K562 (cell line): ENCODE measurements at regions of chr2 and their contacts with region 1.

Region 1: DNA sequence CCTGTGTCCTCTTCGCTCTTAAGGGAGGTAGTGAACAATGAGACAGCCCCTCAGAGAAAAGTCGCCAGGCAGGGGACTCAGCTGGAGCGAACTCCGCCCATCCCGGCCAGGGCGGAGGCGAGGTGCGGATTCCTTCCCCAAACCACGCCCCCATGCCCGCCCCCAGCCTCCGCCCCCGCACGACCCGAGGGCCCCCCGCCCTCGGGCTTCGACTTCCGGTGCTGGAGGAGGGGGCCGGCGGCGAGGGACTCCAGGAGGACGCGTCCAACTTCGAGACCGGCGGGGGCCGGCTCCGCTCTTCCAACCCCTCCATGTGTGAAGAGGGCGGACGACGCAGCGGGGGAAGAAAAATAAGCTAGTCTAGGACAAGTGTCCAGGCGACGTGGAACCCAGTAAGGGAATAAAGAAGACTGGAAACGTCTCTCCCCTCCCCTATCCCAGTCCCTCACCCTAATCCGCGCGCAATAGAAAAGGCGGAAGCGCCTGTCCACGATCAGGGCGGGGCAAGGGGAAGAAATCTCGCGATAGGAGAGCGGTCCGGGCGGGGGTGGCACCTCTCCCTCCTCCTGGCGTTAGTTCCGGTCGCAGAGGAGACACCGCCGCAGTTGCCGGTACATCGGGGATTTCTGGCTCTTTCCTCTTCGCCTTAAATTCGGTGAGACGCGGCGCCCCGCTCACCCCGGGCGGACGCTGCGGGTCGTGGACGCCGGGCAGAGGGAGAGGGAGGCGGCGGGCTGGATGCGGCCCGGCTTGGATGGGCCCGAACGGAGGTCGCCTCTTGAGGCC is at the start of gene BZW1:
- DNase-seq: peak; percentile 94 to 96 (median 94)
- ATAC-seq: peak; percentile 88
- H3K4me3 ChIP-seq: peak within 1 kb of the TSS; percentile 96
- H3K27ac ChIP-seq: peak within 1 kb of the TSS; percentile 100
- H3K4me1 ChIP-seq: peaks cover 0 to 7% of the 10 kb centered on the region in 2 experiments; a peak in 3 of 5 replicates
- H3K27me3 ChIP-seq: no peaks in the 10 kb centered on the region
- CTCF ChIP-seq: no peak; a peak in 1 of 6 replicates
- EP300 ChIP-seq: no peak
- POLR2A ChIP-seq: peak; percentile 91
- RAD21 ChIP-seq: no peak
- polyA plus RNA-seq, gene BZW1: 235 to 244 TPM

Region 2: GRCh38 chr2:200578778-200579177 is 232.8 kb before region 1 on chr2:
- CTCF ChIA-PET with region 1: no interaction called
- POLR2A ChIA-PET with region 1: no interaction called
- in situ Hi-C with region 1: no loop called
- intact Hi-C with region 1: no loop called
- DNase-seq: peak in 1 of 4 experiments; percentile 4
- ATAC-seq: 0 out of 3 replicates have a peak, but pooled peaks have one; percentile 49
- H3K4me3 ChIP-seq: no peak overlapping the region
- H3K27ac ChIP-seq: no peak overlapping the region
- H3K4me1 ChIP-seq: no peaks in the 10 kb centered on the region
- H3K27me3 ChIP-seq: no peaks in the 10 kb centered on the region
- CTCF ChIP-seq: peak in 2 of 3 experiments; percentile 4 to 34; a peak in 1 of 6 replicates
- EP300 ChIP-seq: no peak
- POLR2A ChIP-seq: no peak
- RAD21 ChIP-seq: peak; percentile 9 to 36; a peak in 2 of 4 replicates

Region 3: DNA sequence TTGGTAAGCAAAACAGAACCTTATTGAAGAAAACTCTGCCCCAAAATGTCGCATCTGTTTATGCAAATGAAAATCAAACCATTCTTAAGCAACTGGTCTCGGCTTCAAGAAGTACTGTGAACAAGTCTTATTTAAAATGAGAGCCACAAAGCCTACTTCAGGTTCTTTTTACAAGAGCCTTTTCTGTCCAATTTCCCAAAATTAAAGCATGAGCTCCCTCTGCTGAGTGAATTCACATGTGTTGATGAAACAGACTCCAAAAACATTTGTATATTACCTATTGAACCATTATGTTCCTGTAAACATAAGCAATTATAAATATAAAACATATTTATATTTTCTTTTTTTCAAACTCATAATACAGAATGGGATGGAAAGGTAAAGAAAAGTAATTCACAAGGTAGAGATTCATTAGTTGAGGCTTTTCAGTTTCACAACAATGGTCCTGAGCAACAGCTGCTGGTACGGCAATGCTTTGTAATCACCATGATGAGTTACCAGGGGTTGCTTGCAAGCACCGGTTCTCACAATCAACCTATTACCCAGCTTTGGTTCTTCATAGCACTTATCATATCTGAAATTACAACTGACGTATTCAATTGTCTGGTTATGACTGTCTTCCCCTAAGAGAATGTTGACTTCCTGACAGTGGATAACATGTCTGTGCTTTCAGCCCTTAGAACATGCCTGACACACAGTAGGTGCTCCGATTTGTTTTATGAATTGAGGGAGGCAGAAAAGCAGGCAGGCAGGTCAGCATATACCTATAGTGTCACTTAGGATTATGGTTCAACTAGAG is 108.2 kb before region 1 on chr2:
- CTCF ChIA-PET with region 1: no interaction called
- POLR2A ChIA-PET with region 1: no interaction called
- in situ Hi-C with region 1: no loop called
- intact Hi-C with region 1: no loop called
- DNase-seq: peak in 1 of 4 experiments; percentile 48
- ATAC-seq: peak; percentile 63; the same call in 2 of the 3 replicates
- H3K4me3 ChIP-seq: no peak overlapping the region
- H3K27ac ChIP-seq: no peak overlapping the region
- H3K4me1 ChIP-seq: no peaks in the 10 kb centered on the region
- H3K27me3 ChIP-seq: peaks cover 3 to 4% of the 10 kb centered on the region in 2 experiments; a peak in 3 of 5 replicates
- CTCF ChIP-seq: peak; percentile 32 to 68 (median 42); a peak in 4 of 6 replicates
- EP300 ChIP-seq: no peak
- POLR2A ChIP-seq: no peak
- RAD21 ChIP-seq: peak; percentile 85 to 93

Region 4: GRCh38 chr2:200749631-200750322 is 61.8 kb before region 1 on chr2:
- CTCF ChIA-PET with region 1: no interaction called
- POLR2A ChIA-PET with region 1: no interaction called
- in situ Hi-C with region 1: no loop called
- intact Hi-C with region 1: loop called (anchors 5 kb)
- DNase-seq: no peak
- ATAC-seq: no peak; the same call in 2 of the 3 replicates
- H3K4me3 ChIP-seq: no peak overlapping the region
- H3K27ac ChIP-seq: no peak overlapping the region
- H3K4me1 ChIP-seq: peaks cover 0 to 5% of the 10 kb centered on the region in 2 experiments; a peak in 2 of 5 replicates
- H3K27me3 ChIP-seq: peaks cover 4 to 24% of the 10 kb centered on the region in 2 experiments; a peak in 3 of 5 replicates
- CTCF ChIP-seq: no peak
- EP300 ChIP-seq: no peak
- POLR2A ChIP-seq: no peak
- RAD21 ChIP-seq: no peak

Region 5: DNA sequence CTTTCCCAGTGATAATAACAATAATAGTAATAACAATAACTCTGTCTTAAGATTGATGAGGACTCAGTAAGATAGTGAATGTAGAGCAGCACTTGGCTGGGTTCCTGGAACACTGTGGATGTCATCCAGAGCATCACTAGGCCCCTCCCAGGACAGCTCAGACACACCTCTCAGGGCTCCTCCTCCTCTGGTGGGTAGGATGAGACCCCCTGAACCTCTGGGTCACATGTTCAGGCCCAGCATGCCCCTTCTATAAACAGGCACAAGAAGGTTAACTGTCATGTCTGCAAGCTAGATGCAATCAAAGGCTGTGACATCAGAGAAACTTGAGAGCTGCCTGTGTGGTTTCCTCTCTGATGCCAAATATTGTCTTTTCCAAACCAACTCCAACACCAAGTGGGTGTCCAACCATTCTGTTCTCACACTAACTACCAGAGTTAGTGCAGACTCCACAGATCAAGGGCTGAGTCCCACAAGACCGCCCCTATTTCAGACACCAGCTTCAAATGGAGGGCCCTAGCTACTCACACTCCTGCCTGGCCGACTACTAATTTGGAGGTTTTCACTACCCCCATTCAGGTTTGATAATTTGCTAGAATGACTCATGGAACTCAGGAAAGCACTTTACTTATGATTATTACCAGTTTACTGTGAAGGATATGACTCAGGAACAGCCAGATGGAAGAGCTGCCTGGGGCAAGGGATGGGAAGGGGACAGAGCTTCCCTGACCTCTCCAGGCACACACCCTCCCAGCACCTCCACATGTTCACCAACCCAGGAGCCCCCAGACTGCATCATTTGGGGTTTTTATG is 46.2 kb before region 1 on chr2:
- CTCF ChIA-PET with region 1: no interaction called
- POLR2A ChIA-PET with region 1: no interaction called
- in situ Hi-C with region 1: no loop called
- intact Hi-C with region 1: loop called (anchors 5 kb)
- DNase-seq: peak in 1 of 4 experiments; percentile 7
- ATAC-seq: 0 out of 3 replicates have a peak, but pooled peaks have one; percentile 35
- H3K4me3 ChIP-seq: no peak overlapping the region
- H3K27ac ChIP-seq: no peak overlapping the region
- H3K4me1 ChIP-seq: 0 out of 5 replicates have a peak, but pooled peaks cover 0 to 2% of the 10 kb centered on the region in 2 experiments
- H3K27me3 ChIP-seq: peaks cover 0 to 24% of the 10 kb centered on the region in 2 experiments; a peak in 3 of 5 replicates
- CTCF ChIP-seq: no peak
- EP300 ChIP-seq: no peak
- POLR2A ChIP-seq: no peak
- RAD21 ChIP-seq: no peak

Region 6: DNA sequence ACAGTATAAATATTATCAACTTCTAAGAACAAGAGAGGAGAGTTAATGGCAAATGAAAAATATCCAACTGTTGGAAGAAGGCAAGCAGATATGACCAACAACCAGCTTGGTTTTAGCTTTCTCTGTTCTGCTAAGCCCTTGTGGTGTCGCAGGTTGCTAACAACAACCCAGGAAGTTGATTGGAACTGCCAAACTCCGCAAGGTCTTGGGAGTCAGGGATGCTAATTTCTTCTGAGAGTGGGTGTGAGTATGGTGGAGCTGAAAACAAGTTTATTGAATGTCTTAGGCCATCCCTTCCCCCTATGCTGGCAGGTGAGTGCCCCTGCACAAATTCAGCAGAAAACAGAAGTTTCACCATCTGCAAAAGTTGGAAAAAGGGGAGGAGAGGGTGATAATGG is 17.7 kb after region 1 on chr2:
- CTCF ChIA-PET with region 1: no interaction called
- POLR2A ChIA-PET with region 1: interaction called, 17 read pairs
- in situ Hi-C with region 1: no loop called
- intact Hi-C with region 1: no loop called
- DNase-seq: no peak
- ATAC-seq: no peak
- H3K4me3 ChIP-seq: no peak overlapping the region
- H3K27ac ChIP-seq: no peak overlapping the region
- H3K4me1 ChIP-seq: no peaks in the 10 kb centered on the region
- H3K27me3 ChIP-seq: no peaks in the 10 kb centered on the region
- CTCF ChIP-seq: no peak
- EP300 ChIP-seq: no peak
- POLR2A ChIP-seq: no peak
- RAD21 ChIP-seq: no peak

Region 7: GRCh38 chr2:200864176-200864976 is 52.8 kb after region 1 on chr2 and contains the start of gene CLK1:
- CTCF ChIA-PET with region 1: no interaction called
- POLR2A ChIA-PET with region 1: interaction called, 3 read pairs
- in situ Hi-C with region 1: no loop called
- intact Hi-C with region 1: loop called (anchors 5 kb)
- DNase-seq: peak; percentile 77 to 94 (median 81)
- ATAC-seq: peak; percentile 88
- H3K4me3 ChIP-seq: peak within 1 kb of the TSS; percentile 73
- H3K27ac ChIP-seq: peak within 1 kb of the TSS; percentile 98
- H3K4me1 ChIP-seq: peaks cover 9 to 15% of the 10 kb centered on the region in 2 experiments; a peak in 4 of 5 replicates
- H3K27me3 ChIP-seq: no peaks in the 10 kb centered on the region
- CTCF ChIP-seq: no peak
- EP300 ChIP-seq: peak; percentile 38; the same call in 1 of the 2 replicates
- POLR2A ChIP-seq: peak; percentile 97
- RAD21 ChIP-seq: no peak
- polyA plus RNA-seq, gene CLK1: 49.3 to 50.7 TPM

Region 8: GRCh38 chr2:200888704-200889625 is 77.4 kb after region 1 on chr2 and contains the starts of genes NIF3L1 and PPIL3:
- CTCF ChIA-PET with region 1: no interaction called
- POLR2A ChIA-PET with region 1: no interaction called
- in situ Hi-C with region 1: no loop called
- intact Hi-C with region 1: loop called (anchors 2 kb)
- DNase-seq: peak; percentile 80 to 98 (median 84)
- ATAC-seq: peak; percentile 89
- H3K4me3 ChIP-seq: peak within 1 kb of the TSS; percentile 46
- H3K27ac ChIP-seq: peak within 1 kb of the TSS; percentile 99
- H3K4me1 ChIP-seq: peaks cover 4 to 16% of the 10 kb centered on the region in 2 experiments; a peak in 4 of 5 replicates
- H3K27me3 ChIP-seq: no peaks in the 10 kb centered on the region
- CTCF ChIP-seq: no peak
- EP300 ChIP-seq: peak; percentile 49
- POLR2A ChIP-seq: peak; percentile 90
- RAD21 ChIP-seq: no peak; a peak in 1 of 4 replicates
- polyA plus RNA-seq, gene NIF3L1: 79.3 to 80.0 TPM
- polyA plus RNA-seq, gene PPIL3: 59.4 to 64.6 TPM